HEK293 (cell line): ENCODE measurements at regions of chr7 and their contacts with region 1.

Region 1: DNA sequence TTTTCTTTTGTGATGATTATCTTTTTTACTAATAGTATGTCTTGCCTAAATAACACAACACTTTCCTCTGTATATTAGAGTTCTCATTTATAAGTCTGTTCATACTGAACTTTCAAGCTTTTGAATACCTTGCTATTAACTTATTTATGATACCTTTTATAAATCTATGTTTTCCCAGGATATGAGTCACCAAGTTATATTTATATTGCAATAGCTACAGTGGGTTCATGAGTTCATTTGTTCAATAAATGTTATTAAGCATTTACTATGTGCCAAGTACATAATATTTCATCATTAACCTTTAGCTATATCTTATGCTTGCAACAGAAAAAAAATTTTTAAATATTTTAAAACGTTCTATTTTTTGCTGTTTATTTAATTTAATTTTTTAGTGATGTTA is 18.3 kb downstream of the CLCN1 start:
- H3K4me3 ChIP-seq: no peak overlapping the region
- H3K27ac ChIP-seq: no peak overlapping the region
- H3K4me1 ChIP-seq: no peaks in the 10 kb centered on the region
- CTCF ChIP-seq: no peak

Region 2: DNA sequence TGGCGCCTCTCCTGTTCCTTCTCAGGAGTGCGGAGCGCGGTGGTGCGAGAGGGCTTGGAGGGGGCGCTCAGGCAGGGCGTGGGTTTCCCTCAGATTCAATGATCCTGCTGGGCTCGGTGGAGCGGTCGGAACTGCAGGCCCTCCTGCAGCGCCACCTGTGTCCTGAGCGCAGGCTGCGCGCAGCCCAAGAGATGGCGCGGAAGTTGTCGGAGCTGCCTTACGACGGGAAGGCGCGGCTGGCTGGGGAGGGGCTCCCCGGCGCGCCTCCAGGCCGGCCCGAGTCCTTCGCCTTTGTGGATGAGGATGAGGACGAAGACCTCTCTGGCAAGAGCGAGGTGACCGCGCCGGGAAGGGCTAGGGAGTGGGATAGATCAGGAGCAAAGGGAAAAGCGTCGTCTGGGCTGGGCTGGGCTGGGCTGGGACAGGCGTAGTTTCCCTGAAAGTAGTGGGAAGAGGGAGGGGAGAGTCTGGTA is 11.2 kb after region 1 on chr7:
- CTCF ChIA-PET with region 1: interaction called, 25 read pairs
- POLR2A ChIA-PET with region 1: no interaction called
- H3K4me3 ChIP-seq: peak overlapping the region; percentile 15; the same call in 1 of the 2 replicates
- H3K27ac ChIP-seq: no peak overlapping the region
- H3K4me1 ChIP-seq: no peaks in the 10 kb centered on the region
- CTCF ChIP-seq: peak; percentile 96